ENCODE measurements at regions of chr6 and their contacts with region 1.

Region 1: GRCh38 chr6:80094017-80094416 is 12.5 kb upstream of the BCKDHB start:
- DNase-seq: no peak
- ATAC-seq: no peak
- H3K4me3 ChIP-seq: no peak overlapping the region
- H3K27ac ChIP-seq: no peak overlapping the region
- H3K4me1 ChIP-seq: no peaks in the 10 kb centered on the region
- H3K27me3 ChIP-seq: peaks cover 12% of the 10 kb centered on the region
- CTCF ChIP-seq: peak; percentile 64; the same call in 1 of the 2 replicates

Region 2: GRCh38 chr6:79949233-79949632 is 144.8 kb before region 1 on chr6:
- CTCF ChIA-PET with region 1: no interaction called
- POLR2A ChIA-PET with region 1: no interaction called
- in situ Hi-C with region 1: no loop called
- intact Hi-C with region 1: loop called (anchors 1 kb)
- DNase-seq: peak; percentile 20
- ATAC-seq: peak; percentile 77
- H3K4me3 ChIP-seq: no peak overlapping the region
- H3K27ac ChIP-seq: no peak overlapping the region
- H3K4me1 ChIP-seq: no peaks in the 10 kb centered on the region
- H3K27me3 ChIP-seq: peaks cover 12% of the 10 kb centered on the region; the same call in 1 of the 2 replicates
- CTCF ChIP-seq: peak; percentile 73

Measured in Panc1 (cell line).